Right ventricle myocardium inferior (tissue), 1 donor: ENCODE measurements at regions of chr5 and their contacts with region 1.

Region 1: GRCh38 chr5:150523472-150524350 is 15.8 kb downstream of the NDST1 start:
- DNase-seq: no peak
- ATAC-seq: peak; percentile 43

Region 2: GRCh38 chr5:150503977-150504620 is 19.6 kb before region 1 on chr5:
- intact Hi-C with region 1: loop called (anchors 2 kb)
- DNase-seq: no peak
- ATAC-seq: peak; percentile 67

Region 3: GRCh38 chr5:150544611-150545219 is 21.0 kb after region 1 on chr5:
- intact Hi-C with region 1: no loop called
- DNase-seq: peak; percentile 87
- ATAC-seq: peak; percentile 75

Region 4: GRCh38 chr5:150700594-150701293 is 177.0 kb after region 1 on chr5 and contains the start of gene RBM22:
- intact Hi-C with region 1: no loop called
- DNase-seq: peak; percentile 97
- ATAC-seq: peak; percentile 99
- total RNA-seq, gene RBM22: 30.5 TPM

Region 5: DNA sequence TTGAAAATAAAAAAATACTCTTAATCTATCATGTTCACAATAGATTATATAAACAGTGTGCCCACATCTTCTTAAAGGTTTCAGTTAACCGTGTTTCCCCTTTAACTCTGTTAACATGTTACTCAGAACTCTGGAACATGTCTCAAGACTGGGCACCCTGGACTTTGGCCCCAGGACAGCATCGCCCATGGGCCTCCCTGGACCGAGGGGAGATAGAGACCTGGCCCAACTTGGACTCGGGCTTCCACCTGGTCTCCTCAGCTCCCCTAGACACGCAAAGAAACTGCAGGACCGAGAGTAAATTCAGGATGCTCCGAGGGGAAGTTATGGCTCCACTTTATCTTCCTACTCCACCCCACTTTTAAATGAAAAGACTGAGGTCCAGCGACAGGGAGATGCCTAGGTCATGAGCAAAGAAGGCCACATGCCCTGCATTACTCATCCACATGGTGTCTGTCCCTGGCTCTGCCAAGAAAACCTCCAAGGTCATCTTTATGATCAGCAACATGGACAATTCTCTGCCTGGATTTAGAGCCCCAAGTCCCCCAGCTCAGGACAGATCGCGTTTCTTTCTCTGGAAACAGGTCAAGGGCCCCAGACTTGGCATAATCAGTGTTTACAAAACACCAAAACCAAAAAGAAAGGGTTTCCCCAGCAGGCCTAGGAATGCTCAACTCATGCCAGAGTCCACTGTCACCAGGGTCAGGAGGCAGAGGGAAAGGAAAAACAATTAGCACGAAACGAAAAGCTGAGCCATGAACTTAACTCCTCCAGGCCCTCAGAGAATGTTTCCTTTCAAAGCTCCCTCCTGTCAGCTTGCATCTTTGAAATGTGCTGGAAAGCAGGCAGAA is 514.1 kb after region 1 on chr5:
- intact Hi-C with region 1: no loop called
- DNase-seq: peak; percentile 37
- ATAC-seq: peak; percentile 65

Region 6: DNA sequence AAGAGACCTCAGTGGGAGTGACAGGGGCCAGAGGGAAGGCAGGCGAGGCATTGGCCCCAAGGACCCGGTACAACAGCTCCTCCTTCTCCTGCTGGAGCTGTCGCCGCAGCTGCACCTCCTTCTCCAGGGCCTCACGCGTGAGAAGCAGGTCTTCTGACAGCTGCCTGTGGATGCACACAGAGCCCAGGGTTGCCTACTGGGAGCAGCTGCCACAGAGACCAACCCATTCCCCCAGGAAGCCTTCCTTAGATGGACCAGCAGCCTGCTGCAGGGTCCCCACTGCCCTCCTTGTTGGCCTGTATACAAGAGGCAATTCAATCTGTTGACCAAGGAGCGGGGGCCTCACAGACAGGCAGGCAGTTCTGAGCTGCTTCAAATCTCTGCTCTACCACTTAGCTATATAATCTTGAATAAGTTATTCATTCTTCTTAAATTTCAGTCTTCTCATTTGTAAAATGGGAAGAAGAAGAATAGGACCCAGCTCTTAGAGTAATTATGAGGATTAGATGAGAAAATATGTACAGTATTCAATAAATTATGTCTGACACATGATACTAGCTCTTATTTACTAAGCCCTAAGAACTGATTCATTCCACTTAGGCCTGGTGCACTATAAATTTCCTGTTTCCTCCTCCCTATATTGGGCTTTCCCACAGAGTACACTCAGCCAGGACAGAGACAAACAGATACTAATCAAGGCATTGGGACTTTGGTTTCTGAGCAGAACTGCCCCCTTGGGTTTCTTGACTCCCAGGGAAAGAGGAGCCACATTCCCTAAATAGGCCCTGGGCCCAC is 659.9 kb after region 1 on chr5:
- intact Hi-C with region 1: no loop called
- DNase-seq: no peak
- ATAC-seq: no peak